GM12878 (cell line): ENCODE measurements at regions of chr7 and their contacts with region 1.

Region 1: DNA sequence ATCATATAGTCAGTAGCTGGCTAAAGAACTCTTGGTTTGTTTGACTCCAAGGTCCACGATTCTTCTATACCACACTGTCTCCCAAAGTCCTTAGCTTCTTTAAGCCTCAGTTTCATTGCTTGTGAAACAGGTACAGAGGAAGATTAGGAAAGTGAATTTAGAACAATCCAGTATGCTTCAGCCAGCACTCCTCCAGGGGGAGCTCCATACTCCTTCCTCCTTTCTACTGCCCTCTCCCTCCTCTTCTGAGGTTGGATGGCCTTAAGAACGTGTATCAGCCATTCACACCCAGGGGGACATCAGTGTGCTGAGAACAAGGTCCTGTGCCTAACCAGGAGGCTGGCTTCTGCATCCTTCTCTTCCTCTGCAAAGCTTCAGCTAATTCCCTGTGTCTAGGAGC is 54.8 kb upstream of the CALD1 start:
- DNase-seq: peak; percentile 11
- ATAC-seq: peak; percentile 85
- H3K4me3 ChIP-seq: no peak overlapping the region
- H3K27ac ChIP-seq: no peak overlapping the region
- H3K4me1 ChIP-seq: no peaks in the 10 kb centered on the region
- H3K27me3 ChIP-seq: no peaks in the 10 kb centered on the region; a peak in 1 of 4 replicates
- CTCF ChIP-seq: peak; percentile 48 to 59 (median 52); a peak in 5 of 6 replicates
- EP300 ChIP-seq: no peak
- POLR2A ChIP-seq: no peak
- RAD21 ChIP-seq: peak; percentile 52

Region 2: DNA sequence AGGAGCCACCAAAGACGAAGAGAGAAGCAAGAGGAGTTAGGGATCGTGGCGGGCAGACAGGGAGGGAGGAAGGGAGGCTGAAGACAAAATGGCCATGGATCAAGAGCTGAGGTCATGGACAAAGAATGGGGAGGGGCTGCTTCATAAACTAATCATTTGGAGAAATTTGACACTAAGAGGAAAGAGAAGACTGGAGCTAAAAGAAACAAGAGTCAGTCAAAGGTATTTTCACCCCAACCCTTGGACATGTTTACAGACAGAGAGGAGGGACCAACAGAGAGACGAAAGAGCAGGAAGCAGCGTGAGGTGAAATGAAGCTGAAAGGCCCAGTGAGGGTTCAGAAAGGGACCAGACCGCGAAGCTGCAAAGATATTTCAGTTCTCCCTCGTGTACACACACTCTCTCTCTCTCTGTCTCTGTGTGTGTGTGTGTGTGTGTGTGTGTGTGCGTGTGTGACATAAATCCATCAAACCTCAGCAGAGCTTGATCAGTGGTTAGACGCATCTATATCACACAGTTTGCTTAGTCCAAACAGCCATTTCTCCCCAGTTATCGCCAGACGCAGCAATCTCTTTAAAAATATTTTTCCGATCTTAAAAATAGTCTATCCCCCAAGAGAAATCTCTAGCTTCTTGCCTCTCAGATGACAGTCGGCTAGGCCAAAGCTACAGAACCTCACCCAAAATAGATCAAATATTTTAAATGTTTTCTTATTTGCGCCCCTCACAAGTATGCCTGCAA is 42.3 kb after region 1 on chr7:
- CTCF ChIA-PET with region 1: no interaction called
- POLR2A ChIA-PET with region 1: no interaction called
- RAD21 ChIA-PET with region 1: no interaction called
- SMC1A ChIA-PET with region 1: no interaction called
- in situ Hi-C with region 1: no loop called
- intact Hi-C with region 1: loop called (anchors 5 kb)
- DNase-seq: peak; percentile 40
- ATAC-seq: peak; percentile 85
- H3K4me3 ChIP-seq: no peak overlapping the region
- H3K27ac ChIP-seq: no peak overlapping the region
- H3K4me1 ChIP-seq: peaks cover 8% of the 10 kb centered on the region
- H3K27me3 ChIP-seq: no peaks in the 10 kb centered on the region
- CTCF ChIP-seq: no peak
- EP300 ChIP-seq: no peak
- POLR2A ChIP-seq: no peak
- RAD21 ChIP-seq: no peak